IMR-90 (cell line): ENCODE measurements at regions of chr10 and their contacts with region 1.

Region 1: GRCh38 chr10:4767033-4767814 is 58.8 kb upstream of the AKR1E2 start:
- DNase-seq: peak; percentile 66
- ATAC-seq: no peak
- H3K4me3 ChIP-seq: no peak overlapping the region
- H3K27ac ChIP-seq: peak overlapping the region; percentile 57
- H3K4me1 ChIP-seq: peaks cover 22% of the 10 kb centered on the region
- H3K27me3 ChIP-seq: no peaks in the 10 kb centered on the region
- CTCF ChIP-seq: peak; percentile 76
- POLR2A ChIP-seq: no peak
- RAD21 ChIP-seq: peak; percentile 83

Region 2: DNA sequence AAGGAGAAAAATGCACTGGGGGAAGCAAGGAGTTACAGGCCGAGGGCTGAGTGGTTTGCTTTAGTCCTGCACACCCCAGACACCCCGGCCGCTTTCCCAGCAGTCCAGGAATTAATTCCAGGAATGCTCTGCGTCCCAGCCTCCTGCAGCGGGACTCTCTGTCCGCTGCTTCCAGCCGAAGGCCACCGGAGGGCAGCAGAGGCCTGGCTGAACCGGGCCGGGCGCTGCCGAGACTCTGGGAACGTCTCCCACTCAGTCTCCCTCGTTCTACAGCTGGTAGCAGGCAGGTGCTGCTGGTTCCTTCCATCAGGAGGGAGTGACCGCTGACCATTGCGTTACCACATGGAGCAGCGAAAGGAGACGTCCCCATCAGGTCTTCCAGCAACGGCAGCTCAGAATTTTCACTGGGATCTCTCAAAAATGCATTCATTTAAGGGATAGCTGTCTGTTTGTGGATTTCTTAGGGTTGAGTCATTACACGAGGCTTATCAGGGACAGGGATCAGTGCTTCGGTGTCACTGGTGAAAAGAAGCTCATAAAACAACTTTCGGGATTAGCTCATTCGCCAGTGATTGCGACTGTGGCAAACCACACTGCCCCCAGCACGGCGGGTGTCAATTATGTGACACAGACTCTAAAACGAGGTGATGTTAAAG is 1569.7 kb before region 1 on chr10:
- CTCF ChIA-PET with region 1: interaction called, 5 read pairs
- POLR2A ChIA-PET with region 1: no interaction called
- dilution Hi-C with region 1: no loop called
- in situ Hi-C with region 1: loop called (anchors 10 kb)
- intact Hi-C with region 1: loop called (anchors 1 kb)
- DNase-seq: peak; percentile 84
- ATAC-seq: peak; percentile 91
- H3K4me3 ChIP-seq: peak overlapping the region; percentile 37
- H3K27ac ChIP-seq: peak overlapping the region; percentile 12
- H3K4me1 ChIP-seq: peaks cover 10% of the 10 kb centered on the region
- H3K27me3 ChIP-seq: peaks cover 9% of the 10 kb centered on the region
- CTCF ChIP-seq: peak; percentile 95
- POLR2A ChIP-seq: peak; percentile 66
- RAD21 ChIP-seq: peak; percentile 98

Region 3: GRCh38 chr10:3452173-3452626 is 1315.0 kb before region 1 on chr10:
- CTCF ChIA-PET with region 1: no interaction called
- POLR2A ChIA-PET with region 1: no interaction called
- dilution Hi-C with region 1: no loop called
- in situ Hi-C with region 1: no loop called
- intact Hi-C with region 1: loop called (anchors 5 kb)
- DNase-seq: peak; percentile 97
- ATAC-seq: peak; percentile 92
- H3K4me3 ChIP-seq: peak overlapping the region; percentile 17; the same call in 1 of the 2 replicates
- H3K27ac ChIP-seq: peak overlapping the region; percentile 95; the same call in 1 of the 2 replicates
- H3K4me1 ChIP-seq: peaks cover 13% of the 10 kb centered on the region
- H3K27me3 ChIP-seq: no peaks in the 10 kb centered on the region
- CTCF ChIP-seq: peak; percentile 68
- POLR2A ChIP-seq: 0 out of 2 replicates have a peak, but pooled peaks have one; percentile 37
- RAD21 ChIP-seq: peak; percentile 75

Region 4: DNA sequence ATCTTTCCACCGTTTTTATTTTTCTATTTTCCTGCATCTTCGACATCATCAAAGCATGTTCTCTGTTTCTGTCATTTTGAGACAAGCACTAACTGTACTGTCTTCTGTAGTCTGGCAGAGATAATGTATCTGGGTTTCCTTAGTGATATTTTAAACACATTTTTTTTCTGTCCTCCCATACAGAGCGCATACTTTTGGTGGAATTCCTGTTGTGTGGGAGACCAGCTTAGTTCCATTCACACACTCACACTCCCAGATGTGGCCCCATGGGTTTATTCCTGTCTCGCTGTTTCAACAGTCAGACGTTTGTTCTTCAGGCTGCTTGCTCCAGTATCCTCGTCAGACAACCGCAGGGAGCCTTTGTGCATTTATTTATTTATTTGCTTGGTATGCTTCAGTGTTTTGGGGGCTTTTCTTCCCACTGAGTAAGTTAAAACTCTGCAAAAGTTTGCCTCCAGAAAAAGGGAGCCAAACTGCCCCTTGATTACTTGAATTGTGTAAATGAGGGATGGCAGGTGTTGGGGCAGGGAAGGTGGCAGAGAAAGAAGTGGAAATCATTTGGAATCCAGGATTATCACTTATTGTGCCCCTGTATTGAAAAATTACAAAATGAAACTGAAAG is 525.4 kb before region 1 on chr10:
- CTCF ChIA-PET with region 1: interaction called, 3 read pairs
- POLR2A ChIA-PET with region 1: no interaction called
- dilution Hi-C with region 1: no loop called
- in situ Hi-C with region 1: no loop called
- intact Hi-C with region 1: loop called (anchors 5 kb)
- DNase-seq: peak; percentile 100
- ATAC-seq: peak; percentile 82
- H3K4me3 ChIP-seq: peak overlapping the region; percentile 4; the same call in 1 of the 2 replicates
- H3K27ac ChIP-seq: peak overlapping the region; percentile 68
- H3K4me1 ChIP-seq: peaks cover 11% of the 10 kb centered on the region
- H3K27me3 ChIP-seq: no peaks in the 10 kb centered on the region
- CTCF ChIP-seq: no peak
- POLR2A ChIP-seq: peak; percentile 73; the same call in 1 of the 2 replicates
- RAD21 ChIP-seq: peak; percentile 20; the same call in 1 of the 2 replicates

Region 5: DNA sequence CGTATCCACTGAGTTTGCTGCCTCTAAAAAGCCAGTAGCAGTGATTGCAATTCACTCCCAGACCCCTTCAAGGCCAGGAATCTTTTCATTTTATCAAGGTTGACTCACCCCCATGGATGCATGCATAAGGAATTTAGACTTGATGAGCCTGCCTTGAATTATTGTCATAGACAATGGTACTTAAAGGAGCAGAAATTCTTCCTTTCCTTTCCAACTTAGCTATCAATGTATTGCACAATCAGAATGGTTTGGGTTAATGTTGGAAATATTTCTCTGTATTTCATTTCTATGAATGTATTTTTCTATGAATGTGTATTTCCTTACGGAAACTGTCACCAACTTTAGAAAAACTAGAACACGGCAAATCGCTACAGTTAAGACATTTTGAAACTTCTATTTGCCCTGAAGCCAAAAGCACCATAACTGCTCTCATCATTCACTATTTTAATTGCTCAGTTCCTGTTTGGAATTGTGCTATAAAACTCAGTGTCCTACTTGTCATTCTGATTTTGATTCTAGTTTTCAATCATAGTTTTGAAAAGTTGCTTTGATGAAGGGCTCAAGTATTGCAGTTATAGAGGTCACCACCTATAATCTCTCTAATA is 296.9 kb before region 1 on chr10:
- CTCF ChIA-PET with region 1: no interaction called
- POLR2A ChIA-PET with region 1: no interaction called
- dilution Hi-C with region 1: no loop called
- in situ Hi-C with region 1: no loop called
- intact Hi-C with region 1: loop called (anchors 1 kb)
- DNase-seq: peak; percentile 92
- ATAC-seq: peak; percentile 86
- H3K4me3 ChIP-seq: no peak overlapping the region
- H3K27ac ChIP-seq: no peak overlapping the region
- H3K4me1 ChIP-seq: peaks cover 7% of the 10 kb centered on the region
- H3K27me3 ChIP-seq: no peaks in the 10 kb centered on the region
- CTCF ChIP-seq: no peak
- POLR2A ChIP-seq: no peak
- RAD21 ChIP-seq: 0 out of 2 replicates have a peak, but pooled peaks have one; percentile 10

Region 6: DNA sequence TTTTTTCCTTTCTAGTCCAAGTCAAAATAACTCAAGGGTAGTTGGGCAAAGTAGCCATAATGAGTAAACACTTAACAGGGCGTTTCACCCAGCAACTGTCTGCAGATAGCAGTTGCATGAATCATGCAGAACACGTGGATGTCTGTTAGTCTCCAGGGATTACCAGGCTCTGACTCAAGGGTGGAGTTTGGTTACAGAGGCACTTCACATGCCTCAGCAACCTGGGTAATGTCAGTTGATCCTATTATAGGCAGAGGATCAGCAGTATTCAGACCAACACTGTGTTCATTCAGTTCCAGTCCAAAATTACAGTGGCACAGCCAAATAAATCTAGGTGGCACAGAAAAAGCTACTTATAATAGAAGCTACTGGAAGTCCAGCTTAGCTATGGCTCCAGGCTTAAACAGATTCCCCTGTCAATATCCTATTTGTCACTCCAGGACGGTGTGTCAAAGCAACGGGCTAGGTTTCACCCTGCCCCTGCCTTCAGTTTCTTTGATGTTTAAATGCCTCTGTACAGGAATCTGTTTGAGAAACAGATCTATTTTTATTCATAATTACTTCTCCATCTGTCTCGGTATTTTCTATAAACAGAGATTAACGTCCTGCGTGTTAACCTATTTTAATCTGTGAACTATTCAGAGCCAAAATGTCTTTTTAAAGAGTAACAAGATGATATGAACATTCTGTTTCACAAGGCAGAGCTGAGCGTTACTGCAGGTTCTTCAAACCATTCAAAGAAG is 103.9 kb before region 1 on chr10:
- CTCF ChIA-PET with region 1: interaction called, 15 read pairs
- POLR2A ChIA-PET with region 1: no interaction called
- dilution Hi-C with region 1: no loop called
- in situ Hi-C with region 1: no loop called
- intact Hi-C with region 1: loop called (anchors 2 kb)
- DNase-seq: peak; percentile 99
- ATAC-seq: peak; percentile 94
- H3K4me3 ChIP-seq: peak overlapping the region; percentile 8; the same call in 1 of the 2 replicates
- H3K27ac ChIP-seq: peak overlapping the region; percentile 92
- H3K4me1 ChIP-seq: peaks cover 15% of the 10 kb centered on the region
- H3K27me3 ChIP-seq: no peaks in the 10 kb centered on the region
- CTCF ChIP-seq: no peak
- POLR2A ChIP-seq: peak; percentile 86
- RAD21 ChIP-seq: peak; percentile 6; the same call in 1 of the 2 replicates

Region 7: GRCh38 chr10:4839401-4839800 is 72.2 kb after region 1 on chr10:
- CTCF ChIA-PET with region 1: no interaction called
- POLR2A ChIA-PET with region 1: no interaction called
- dilution Hi-C with region 1: no loop called
- in situ Hi-C with region 1: no loop called
- intact Hi-C with region 1: no loop called
- DNase-seq: no peak
- ATAC-seq: no peak
- H3K4me3 ChIP-seq: no peak overlapping the region
- H3K27ac ChIP-seq: no peak overlapping the region
- H3K4me1 ChIP-seq: no peaks in the 10 kb centered on the region
- H3K27me3 ChIP-seq: no peaks in the 10 kb centered on the region
- CTCF ChIP-seq: no peak
- POLR2A ChIP-seq: no peak
- RAD21 ChIP-seq: no peak